Tibial artery (tissue), 4 donors: ENCODE measurements at regions of chr2 and their contacts with region 1.

Region 1: DNA sequence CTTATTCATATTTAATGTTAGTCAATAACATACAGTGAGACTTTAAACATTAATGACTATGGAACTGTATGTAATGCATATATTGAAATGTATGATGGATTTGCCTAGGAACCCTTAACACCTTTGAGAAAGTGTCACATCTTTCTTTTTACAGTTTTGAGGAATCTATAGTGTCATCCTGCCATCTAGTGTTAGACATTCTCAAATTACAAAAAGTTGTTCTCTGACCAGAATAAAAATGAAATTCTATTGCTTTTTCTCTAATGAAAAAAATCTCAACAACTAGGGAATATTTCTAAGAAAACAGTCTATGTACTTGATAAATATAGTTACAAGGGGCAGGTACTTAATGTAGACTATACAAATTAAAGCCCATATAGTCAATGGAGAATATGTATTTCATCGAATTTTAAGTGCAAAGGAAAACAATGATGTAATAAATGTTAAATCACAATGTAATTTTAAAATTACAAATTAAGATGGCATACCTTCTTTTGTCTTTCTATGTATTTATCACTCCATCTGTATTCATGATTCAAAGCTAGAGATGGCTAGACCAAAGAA is 5.1 kb upstream of the CALCRL start:
- DNase-seq: no peak
- H3K4me3 ChIP-seq: no peak overlapping the region
- H3K27ac ChIP-seq: no peak overlapping the region
- H3K4me1 ChIP-seq: peaks cover 0 to 8% (median 0%) of the 10 kb centered on the region in 4 donors
- H3K27me3 ChIP-seq: no peaks in the 10 kb centered on the region
- CTCF ChIP-seq: peak; percentile 52 to 72

Region 2: DNA sequence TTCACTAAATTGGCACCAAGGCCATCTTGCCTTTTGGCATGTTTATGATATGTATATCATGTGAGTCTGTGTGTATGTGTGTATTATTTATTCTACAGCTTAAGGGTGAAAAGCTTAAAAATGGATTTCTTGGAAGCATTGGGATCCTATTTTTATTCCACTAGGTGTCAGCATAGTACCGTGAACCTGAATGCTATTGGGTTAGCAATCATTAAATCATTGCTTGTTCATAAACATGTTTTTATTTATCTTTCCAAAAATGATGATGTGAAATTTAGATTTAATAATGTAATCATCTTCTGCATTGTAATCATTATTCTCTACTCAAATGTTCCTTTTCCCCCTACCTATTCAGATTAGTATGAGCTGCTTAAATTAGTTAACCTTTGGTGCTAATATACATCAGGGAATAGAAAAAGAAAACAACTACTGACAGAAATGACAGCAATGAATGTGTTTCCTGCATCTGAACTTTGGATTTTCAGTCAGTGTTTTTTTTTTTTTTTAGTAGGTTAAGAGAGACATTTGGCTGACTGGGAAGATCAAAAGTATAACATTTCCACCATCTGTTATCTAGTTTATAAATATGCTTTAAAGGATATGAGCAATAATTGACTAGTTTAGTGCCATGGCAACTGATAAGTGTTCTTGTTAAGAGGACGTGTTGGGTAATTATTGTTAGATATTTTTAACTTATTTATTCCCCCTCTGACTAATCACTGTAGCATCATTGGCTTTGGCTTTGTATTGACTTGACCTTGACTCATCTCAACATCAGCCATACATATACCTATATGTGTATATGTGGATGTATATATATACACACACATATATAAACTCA is 590.1 kb before region 1 on chr2:
- intact Hi-C with region 1: loop called (anchors 5 kb)
- DNase-seq: no peak
- H3K4me3 ChIP-seq: no peak overlapping the region
- H3K27ac ChIP-seq: no peak overlapping the region
- H3K4me1 ChIP-seq: no peaks in the 10 kb centered on the region
- H3K27me3 ChIP-seq: no peaks in the 10 kb centered on the region
- CTCF ChIP-seq: peak; percentile 73 to 83

Region 3: GRCh38 chr2:187013058-187013457 is 440.1 kb before region 1 on chr2:
- intact Hi-C with region 1: no loop called
- DNase-seq: no peak
- H3K4me3 ChIP-seq: no peak overlapping the region
- H3K27ac ChIP-seq: no peak overlapping the region
- H3K4me1 ChIP-seq: no peaks in the 10 kb centered on the region
- H3K27me3 ChIP-seq: no peaks in the 10 kb centered on the region
- CTCF ChIP-seq: no peak

Region 4: GRCh38 chr2:187138265-187138664 is 314.9 kb before region 1 on chr2:
- intact Hi-C with region 1: loop called (anchors 10 kb)
- DNase-seq: no peak
- H3K4me3 ChIP-seq: no peak overlapping the region
- H3K27ac ChIP-seq: no peak overlapping the region
- H3K4me1 ChIP-seq: no peaks in the 10 kb centered on the region
- H3K27me3 ChIP-seq: no peaks in the 10 kb centered on the region
- CTCF ChIP-seq: peak; percentile 26 to 38

Region 5: DNA sequence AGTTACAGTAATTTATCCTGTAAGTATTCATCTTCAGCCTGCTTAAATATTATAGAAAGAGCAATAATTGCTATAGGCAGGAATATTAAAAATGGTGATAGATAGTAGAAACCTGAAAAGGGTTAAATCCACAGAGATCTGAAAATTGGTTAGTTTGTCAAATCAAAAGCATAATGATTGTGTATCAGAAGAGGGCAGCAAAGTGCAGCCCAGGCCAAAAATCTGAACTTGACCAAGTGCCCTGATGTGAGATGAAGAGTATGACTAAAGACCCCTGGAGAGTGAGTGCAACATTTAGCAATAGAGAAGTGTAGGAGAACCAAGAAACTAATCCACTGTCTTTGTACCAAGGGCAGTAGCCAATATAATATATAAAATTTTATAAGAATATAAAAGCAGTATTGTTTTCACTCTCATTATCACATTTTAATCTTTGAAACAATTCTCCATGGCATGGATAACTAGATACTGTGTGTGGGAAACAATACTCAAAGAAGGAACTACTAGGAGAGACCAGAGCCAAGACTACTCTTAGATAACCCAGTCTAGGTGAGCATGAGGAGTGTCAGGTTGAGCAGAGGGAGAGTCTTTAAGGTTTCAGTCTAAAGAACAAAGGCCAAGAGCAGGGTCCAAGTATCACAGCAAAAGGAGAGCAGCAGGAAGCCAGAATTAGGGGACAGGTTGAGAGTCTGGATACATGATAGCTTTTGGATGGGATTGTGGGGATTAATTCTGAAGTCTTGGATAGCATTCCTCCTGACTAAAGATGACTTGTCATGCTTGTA is 153.8 kb before region 1 on chr2:
- intact Hi-C with region 1: loop called (anchors 10 kb)
- DNase-seq: no peak
- H3K4me3 ChIP-seq: no peak overlapping the region
- H3K27ac ChIP-seq: no peak overlapping the region
- H3K4me1 ChIP-seq: peaks cover 0 to 24% (median 0%) of the 10 kb centered on the region in 4 donors
- H3K27me3 ChIP-seq: no peaks in the 10 kb centered on the region
- CTCF ChIP-seq: peak; percentile 34 to 47